Activated T-helper 1 cell treated with anti-CD3 and anti-CD28 coated beads, Interleukin-12 subunit alpha, Interleukin-12 subunit beta, Interleukin-2, Interleukin-4 antibody, amounts not matched to agents 30 ng/mL and 10 ng/mL and 1 ng/mL, durations not matched to agents 14 hours and 24 hours and 36 hours (primary cell): ENCODE measurements at regions of chr3 and their contacts with region 1.

Region 1: DNA sequence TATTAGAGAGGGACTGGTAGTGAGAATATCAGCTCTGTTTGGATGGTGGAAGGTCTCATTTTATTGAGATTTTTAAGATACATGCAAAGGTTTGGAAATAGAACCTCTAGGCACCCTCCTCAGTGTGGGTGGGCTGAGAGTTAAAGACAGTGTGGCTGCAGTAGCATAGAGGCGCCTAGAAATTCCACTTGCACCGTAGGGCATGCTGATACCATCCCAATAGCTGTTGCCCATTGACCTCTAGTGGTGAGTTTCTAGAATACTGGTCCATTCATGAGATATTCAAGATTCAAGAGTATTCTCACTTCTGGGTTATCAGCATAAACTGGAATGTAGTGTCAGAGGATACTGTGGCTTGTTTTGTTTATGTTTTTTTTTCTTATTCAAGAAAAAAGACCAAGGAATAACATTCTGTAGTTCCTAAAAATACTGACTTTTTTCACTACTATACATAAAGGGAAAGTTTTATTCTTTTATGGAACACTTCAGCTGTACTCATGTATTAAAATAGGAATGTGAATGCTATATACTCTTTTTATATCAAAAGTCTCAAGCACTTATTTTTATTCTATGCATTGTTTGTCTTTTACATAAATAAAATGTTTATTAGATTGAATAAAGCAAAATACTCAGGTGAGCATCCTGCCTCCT is 87.2 kb downstream of the TGFBR2 start:
- DNase-seq: no peak
- H3K4me3 Mint-ChIP-seq: no peak overlapping the region
- H3K27ac Mint-ChIP-seq: peak overlapping the region; percentile 41
- H3K4me1 Mint-ChIP-seq: peaks cover 60% of the 10 kb centered on the region
- H3K27me3 Mint-ChIP-seq: no peaks in the 10 kb centered on the region

Region 2: GRCh38 chr3:30042274-30042859 is 651.2 kb before region 1 on chr3:
- intact Hi-C with region 1: loop called (anchors 1 kb)
- DNase-seq: peak; percentile 20
- H3K4me3 Mint-ChIP-seq: no peak overlapping the region
- H3K27ac Mint-ChIP-seq: no peak overlapping the region
- H3K4me1 Mint-ChIP-seq: no peaks in the 10 kb centered on the region
- H3K27me3 Mint-ChIP-seq: peaks cover 13% of the 10 kb centered on the region

Region 3: GRCh38 chr3:30199096-30199759 is 494.4 kb before region 1 on chr3:
- intact Hi-C with region 1: loop called (anchors 1 kb)
- DNase-seq: peak; percentile 31
- H3K4me3 Mint-ChIP-seq: no peak overlapping the region
- H3K27ac Mint-ChIP-seq: no peak overlapping the region
- H3K4me1 Mint-ChIP-seq: peaks cover 14% of the 10 kb centered on the region
- H3K27me3 Mint-ChIP-seq: no peaks in the 10 kb centered on the region

Region 4: GRCh38 chr3:30518181-30518864 is 175.3 kb before region 1 on chr3:
- intact Hi-C with region 1: loop called (anchors 5 kb)
- DNase-seq: no peak
- H3K4me3 Mint-ChIP-seq: no peak overlapping the region
- H3K27ac Mint-ChIP-seq: no peak overlapping the region
- H3K4me1 Mint-ChIP-seq: peaks cover 22% of the 10 kb centered on the region
- H3K27me3 Mint-ChIP-seq: peaks cover 3% of the 10 kb centered on the region

Region 5: GRCh38 chr3:30586096-30586805 is 107.3 kb before region 1 on chr3:
- intact Hi-C with region 1: no loop called
- DNase-seq: no peak
- H3K4me3 Mint-ChIP-seq: no peak overlapping the region
- H3K27ac Mint-ChIP-seq: no peak overlapping the region
- H3K4me1 Mint-ChIP-seq: no peaks in the 10 kb centered on the region
- H3K27me3 Mint-ChIP-seq: no peaks in the 10 kb centered on the region

Region 6: GRCh38 chr3:30644593-30645012 is 49.0 kb before region 1 on chr3:
- intact Hi-C with region 1: loop called (anchors 2 kb)
- DNase-seq: peak; percentile 66
- H3K4me3 Mint-ChIP-seq: peak overlapping the region; percentile 57
- H3K27ac Mint-ChIP-seq: peak overlapping the region; percentile 94
- H3K4me1 Mint-ChIP-seq: peaks cover 93% of the 10 kb centered on the region
- H3K27me3 Mint-ChIP-seq: no peaks in the 10 kb centered on the region